ENCODE measurements at regions of chr2 and their contacts with region 1.

Region 1: DNA sequence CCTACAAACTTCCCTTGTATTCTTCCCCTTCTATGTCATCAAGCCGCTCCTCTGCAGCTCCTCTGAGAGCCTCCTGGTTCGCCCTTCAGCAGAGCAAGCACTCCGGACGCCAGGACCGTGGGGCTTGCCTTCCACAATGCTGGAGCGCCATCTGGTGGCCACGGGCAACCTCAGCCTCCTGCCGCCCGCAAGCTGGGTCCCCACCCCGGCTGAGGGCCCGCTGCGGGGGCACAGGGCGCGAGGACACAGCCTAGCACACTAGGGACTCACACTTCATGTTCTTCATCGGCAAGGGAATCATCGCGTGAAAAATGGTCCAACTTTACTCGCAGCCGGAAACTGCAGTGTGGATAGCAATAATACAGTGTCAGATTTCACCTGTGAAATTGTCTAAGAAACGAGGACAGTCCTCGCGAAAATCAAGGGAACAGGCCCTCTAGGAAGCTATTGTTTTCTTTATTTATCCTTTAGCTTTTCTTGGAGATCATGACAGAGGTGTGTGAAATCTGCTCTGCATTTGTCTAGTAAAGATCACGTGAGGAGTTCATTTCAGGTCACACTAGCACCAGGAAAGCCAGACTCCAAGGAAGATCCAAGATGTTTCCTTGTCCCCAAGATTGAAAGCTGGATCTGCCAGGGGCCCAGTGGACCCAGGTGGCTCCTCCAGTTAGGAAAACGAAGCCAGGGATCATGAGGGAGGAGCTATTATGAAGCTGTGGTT is 5.8 kb downstream of the PRLH start:
- DNase-seq: peak; percentile 90
- ATAC-seq: peak; percentile 98
- H3K4me3 Mint-ChIP-seq: no peak overlapping the region
- H3K27ac Mint-ChIP-seq: no peak overlapping the region
- H3K4me1 Mint-ChIP-seq: peaks cover 6% of the 10 kb centered on the region
- H3K27me3 Mint-ChIP-seq: peaks cover 3% of the 10 kb centered on the region
- CTCF ChIP-seq: peak; percentile 98

Region 2: DNA sequence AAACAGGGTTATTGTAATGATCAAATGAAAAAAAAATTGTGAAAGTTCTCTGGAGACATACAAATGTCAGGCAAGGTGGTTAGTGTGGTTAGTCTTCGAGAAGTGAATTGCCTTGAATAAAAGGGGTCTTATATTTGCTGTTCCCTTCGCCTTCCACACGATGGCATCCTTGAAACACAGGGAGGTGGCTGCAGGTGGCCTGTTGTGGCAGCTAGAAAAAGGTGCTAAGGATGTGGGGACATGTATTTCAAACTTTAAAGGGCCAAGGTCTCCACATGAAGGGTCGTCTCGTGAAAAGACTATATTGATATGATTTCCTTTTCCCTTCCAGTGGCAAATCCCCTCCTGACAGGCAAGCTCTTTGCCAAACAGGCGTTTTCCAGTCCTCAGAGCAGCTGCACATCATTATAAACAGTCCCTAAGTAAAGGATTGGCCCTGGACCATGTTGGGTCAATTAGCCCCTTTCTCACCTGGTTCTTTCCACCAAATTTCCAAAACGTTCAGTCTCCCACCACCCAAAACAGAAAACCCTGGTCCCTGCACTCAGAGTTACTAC is 418.0 kb before region 1 on chr2:
- CTCF ChIA-PET with region 1: interaction called, 10 read pairs
- POLR2A ChIA-PET with region 1: no interaction called
- intact Hi-C with region 1: loop called (anchors 5 kb)
- DNase-seq: peak; percentile 71
- ATAC-seq: peak; percentile 29
- H3K4me3 Mint-ChIP-seq: no peak overlapping the region
- H3K27ac Mint-ChIP-seq: peak overlapping the region; percentile 86
- H3K4me1 Mint-ChIP-seq: peaks cover 52% of the 10 kb centered on the region
- H3K27me3 Mint-ChIP-seq: no peaks in the 10 kb centered on the region
- CTCF ChIP-seq: peak; percentile 81

Region 3: DNA sequence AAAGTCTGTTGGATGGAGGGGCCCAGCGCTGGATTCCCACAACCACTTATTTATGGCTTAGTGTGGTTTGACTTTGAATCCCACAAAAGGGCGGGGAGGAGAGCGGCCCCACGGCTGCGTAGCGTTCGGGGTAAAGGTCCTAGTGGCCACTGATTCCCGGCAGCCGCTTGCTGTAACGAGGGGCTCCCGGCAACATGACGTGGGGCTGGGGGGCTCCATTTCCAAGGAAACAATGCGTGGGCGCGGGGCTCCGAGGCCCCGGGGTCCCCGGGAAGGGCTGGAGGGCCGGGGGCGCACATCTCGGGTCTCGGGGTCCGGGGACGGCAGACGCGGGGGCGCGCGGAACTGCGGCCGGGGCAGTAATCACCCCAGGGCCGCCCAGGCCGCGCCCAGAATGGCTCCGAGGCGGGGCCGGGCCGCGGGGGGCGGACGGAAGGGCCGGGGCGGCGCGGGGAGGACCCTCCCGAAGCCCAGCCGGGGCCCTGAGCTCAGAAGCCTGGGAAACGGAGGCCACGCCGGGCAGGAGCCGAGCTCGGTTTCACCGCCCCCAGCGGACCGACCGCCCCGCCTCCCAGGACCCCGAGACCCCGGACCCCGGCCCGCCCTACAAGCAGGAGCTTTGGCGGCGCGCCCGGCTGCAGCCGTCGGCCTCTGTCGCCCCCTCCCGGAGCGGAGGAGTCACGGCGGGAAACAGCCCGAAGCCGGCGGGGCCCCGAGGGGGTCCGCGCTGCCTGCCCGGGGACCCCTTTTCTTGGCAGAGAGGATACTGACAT is 97.1 kb before region 1 on chr2:
- CTCF ChIA-PET with region 1: interaction called, 13 read pairs
- POLR2A ChIA-PET with region 1: no interaction called
- intact Hi-C with region 1: no loop called
- DNase-seq: peak; percentile 75
- ATAC-seq: peak; percentile 85
- H3K4me3 Mint-ChIP-seq: peak overlapping the region; percentile 71
- H3K27ac Mint-ChIP-seq: peak overlapping the region; percentile 78
- H3K4me1 Mint-ChIP-seq: peaks cover 10% of the 10 kb centered on the region
- H3K27me3 Mint-ChIP-seq: peaks cover 20% of the 10 kb centered on the region
- CTCF ChIP-seq: peak; percentile 94

Region 4: GRCh38 chr2:237524631-237525030 is 47.5 kb before region 1 on chr2:
- CTCF ChIA-PET with region 1: interaction called, 11 read pairs
- POLR2A ChIA-PET with region 1: no interaction called
- intact Hi-C with region 1: no loop called
- DNase-seq: no peak
- ATAC-seq: no peak
- H3K4me3 Mint-ChIP-seq: no peak overlapping the region
- H3K27ac Mint-ChIP-seq: no peak overlapping the region
- H3K4me1 Mint-ChIP-seq: no peaks in the 10 kb centered on the region
- H3K27me3 Mint-ChIP-seq: no peaks in the 10 kb centered on the region
- CTCF ChIP-seq: no peak

Region 5: DNA sequence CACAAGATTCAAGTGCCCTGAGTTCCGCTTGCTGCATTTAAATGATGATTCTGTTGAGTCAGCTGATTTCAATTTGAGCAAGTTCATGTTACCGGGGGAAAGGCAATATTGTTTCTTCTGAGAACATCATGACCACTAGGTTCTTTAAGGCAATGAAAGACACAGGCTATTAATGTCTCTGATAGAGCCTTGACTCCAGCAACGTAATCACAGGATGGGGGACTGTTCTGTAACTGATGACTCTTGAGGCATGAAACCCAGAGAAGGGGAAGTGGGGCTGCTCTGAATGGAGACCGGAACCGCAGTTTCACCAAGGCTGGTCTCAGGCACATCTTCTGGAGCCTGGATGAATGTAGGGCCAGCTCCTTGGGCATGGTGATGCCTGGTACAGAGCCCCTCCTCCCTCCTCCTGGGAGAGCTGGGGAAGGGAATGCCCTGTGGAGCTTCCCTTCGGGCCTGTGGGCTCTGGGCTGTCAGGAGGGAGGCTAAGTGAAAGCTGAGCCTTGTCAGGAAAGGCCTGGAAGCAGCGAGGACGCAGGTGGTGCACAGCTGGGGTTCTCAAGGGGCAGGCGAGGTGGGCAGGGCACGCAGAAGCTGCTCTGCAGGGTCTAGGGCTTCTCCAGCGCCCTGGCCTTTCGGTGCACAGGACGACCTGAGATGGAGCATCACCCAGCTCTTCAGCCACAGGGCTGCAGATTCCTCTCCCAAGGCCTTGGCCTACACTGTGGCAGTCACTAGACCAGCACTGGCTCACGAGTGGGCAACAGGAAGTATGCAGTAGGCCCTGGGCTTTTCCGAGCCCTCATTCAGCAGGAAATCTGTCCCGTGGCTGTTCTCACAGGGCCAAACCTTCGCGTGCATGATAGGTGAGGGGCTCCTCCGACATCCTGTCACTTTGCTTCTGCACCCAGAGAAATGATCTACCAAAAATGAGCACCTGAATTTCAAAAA is 42.5 kb before region 1 on chr2:
- CTCF ChIA-PET with region 1: interaction called, 16 read pairs
- POLR2A ChIA-PET with region 1: no interaction called
- intact Hi-C with region 1: loop called (anchors 5 kb)
- DNase-seq: no peak
- ATAC-seq: no peak
- H3K4me3 Mint-ChIP-seq: no peak overlapping the region
- H3K27ac Mint-ChIP-seq: no peak overlapping the region
- H3K4me1 Mint-ChIP-seq: no peaks in the 10 kb centered on the region
- H3K27me3 Mint-ChIP-seq: no peaks in the 10 kb centered on the region
- CTCF ChIP-seq: no peak

Region 6: DNA sequence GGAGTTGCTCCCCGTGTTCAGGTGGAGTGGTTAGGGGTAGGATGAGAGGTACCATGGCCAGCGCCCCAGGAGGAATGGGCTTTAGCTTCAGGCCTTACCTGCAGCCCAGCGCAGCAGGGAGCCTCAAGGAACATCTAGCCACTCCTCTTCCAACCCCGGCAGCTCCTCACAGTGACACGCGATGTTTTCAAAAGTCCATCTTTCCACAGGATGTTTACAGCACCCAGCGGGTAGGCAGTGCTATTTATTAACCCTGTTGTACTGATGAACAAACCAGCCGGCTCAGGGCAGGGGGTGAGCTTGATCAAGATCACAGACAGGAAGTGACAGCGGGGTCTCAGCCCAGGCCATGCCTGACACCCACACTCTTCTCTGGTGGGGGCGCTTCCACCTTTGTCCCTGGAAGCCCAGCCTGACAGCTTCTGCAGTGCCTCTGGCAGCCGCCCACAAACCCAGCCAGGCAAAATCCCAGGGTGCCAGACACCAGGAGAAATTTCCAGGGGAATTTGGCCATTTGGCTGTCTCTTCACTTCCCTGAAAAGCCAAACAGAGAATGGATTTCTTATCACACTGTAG is 24.3 kb before region 1 on chr2:
- CTCF ChIA-PET with region 1: interaction called, 13 read pairs
- POLR2A ChIA-PET with region 1: no interaction called
- intact Hi-C with region 1: no loop called
- DNase-seq: no peak
- ATAC-seq: no peak
- H3K4me3 Mint-ChIP-seq: no peak overlapping the region
- H3K27ac Mint-ChIP-seq: no peak overlapping the region
- H3K4me1 Mint-ChIP-seq: no peaks in the 10 kb centered on the region
- H3K27me3 Mint-ChIP-seq: peaks cover 3% of the 10 kb centered on the region
- CTCF ChIP-seq: no peak

Region 7: GRCh38 chr2:237556773-237557632 is 15.2 kb before region 1 on chr2:
- CTCF ChIA-PET with region 1: interaction called, 41 read pairs
- POLR2A ChIA-PET with region 1: interaction called, 4 read pairs
- intact Hi-C with region 1: no loop called
- DNase-seq: peak; percentile 59
- ATAC-seq: peak; percentile 91
- H3K4me3 Mint-ChIP-seq: no peak overlapping the region
- H3K27ac Mint-ChIP-seq: peak overlapping the region; percentile 18
- H3K4me1 Mint-ChIP-seq: peaks cover 12% of the 10 kb centered on the region
- H3K27me3 Mint-ChIP-seq: peaks cover 10% of the 10 kb centered on the region
- CTCF ChIP-seq: no peak

Region 8: DNA sequence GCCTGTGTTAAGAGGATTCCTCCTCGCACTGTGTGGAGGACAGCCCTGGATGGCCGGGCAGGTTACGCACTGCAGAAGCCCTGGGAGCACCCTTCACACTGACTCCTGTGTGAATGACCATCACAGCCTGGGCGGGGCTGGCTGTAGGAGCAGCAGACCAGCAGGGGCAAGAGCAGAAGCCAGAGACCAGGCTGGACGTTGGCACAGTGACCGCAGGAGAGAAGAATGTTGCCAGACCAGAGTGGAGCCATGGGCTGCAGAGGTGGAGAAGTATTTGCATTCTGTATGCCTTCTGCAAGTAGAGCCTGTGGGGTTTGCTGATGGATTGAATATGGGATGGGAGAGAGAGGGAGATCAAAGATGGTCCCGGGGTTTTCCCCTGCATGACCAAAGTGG is 78.3 kb after region 1 on chr2:
- CTCF ChIA-PET with region 1: no interaction called
- POLR2A ChIA-PET with region 1: no interaction called
- intact Hi-C with region 1: no loop called
- DNase-seq: no peak
- ATAC-seq: no peak
- H3K4me3 Mint-ChIP-seq: no peak overlapping the region
- H3K27ac Mint-ChIP-seq: no peak overlapping the region
- H3K4me1 Mint-ChIP-seq: peaks cover 16% of the 10 kb centered on the region
- H3K27me3 Mint-ChIP-seq: peaks cover 2% of the 10 kb centered on the region
- CTCF ChIP-seq: no peak

Region 9: GRCh38 chr2:237691908-237692600 is 119.9 kb after region 1 on chr2:
- CTCF ChIA-PET with region 1: no interaction called
- POLR2A ChIA-PET with region 1: no interaction called
- intact Hi-C with region 1: no loop called
- DNase-seq: peak; percentile 95
- ATAC-seq: peak; percentile 68
- H3K4me3 Mint-ChIP-seq: peak overlapping the region; percentile 98
- H3K27ac Mint-ChIP-seq: peak overlapping the region; percentile 93
- H3K4me1 Mint-ChIP-seq: peaks cover 52% of the 10 kb centered on the region
- H3K27me3 Mint-ChIP-seq: no peaks in the 10 kb centered on the region
- CTCF ChIP-seq: no peak

Region 10: GRCh38 chr2:238288650-238289573 is 716.7 kb after region 1 on chr2:
- CTCF ChIA-PET with region 1: no interaction called
- POLR2A ChIA-PET with region 1: no interaction called
- intact Hi-C with region 1: no loop called
- DNase-seq: peak; percentile 99
- ATAC-seq: peak; percentile 86
- H3K4me3 Mint-ChIP-seq: peak overlapping the region; percentile 83
- H3K27ac Mint-ChIP-seq: peak overlapping the region; percentile 96
- H3K4me1 Mint-ChIP-seq: peaks cover 40% of the 10 kb centered on the region
- H3K27me3 Mint-ChIP-seq: no peaks in the 10 kb centered on the region
- CTCF ChIP-seq: no peak

Measured in activated CD8-positive, alpha-beta T cell treated with anti-CD3 and anti-CD28 coated beads for 36 hours (primary cell).